Activated CD8-positive, alpha-beta T cell treated with anti-CD3 and anti-CD28 coated beads for 36 hours (primary cell): ENCODE measurements at regions of chr1 and their contacts with region 1.

Region 1: DNA sequence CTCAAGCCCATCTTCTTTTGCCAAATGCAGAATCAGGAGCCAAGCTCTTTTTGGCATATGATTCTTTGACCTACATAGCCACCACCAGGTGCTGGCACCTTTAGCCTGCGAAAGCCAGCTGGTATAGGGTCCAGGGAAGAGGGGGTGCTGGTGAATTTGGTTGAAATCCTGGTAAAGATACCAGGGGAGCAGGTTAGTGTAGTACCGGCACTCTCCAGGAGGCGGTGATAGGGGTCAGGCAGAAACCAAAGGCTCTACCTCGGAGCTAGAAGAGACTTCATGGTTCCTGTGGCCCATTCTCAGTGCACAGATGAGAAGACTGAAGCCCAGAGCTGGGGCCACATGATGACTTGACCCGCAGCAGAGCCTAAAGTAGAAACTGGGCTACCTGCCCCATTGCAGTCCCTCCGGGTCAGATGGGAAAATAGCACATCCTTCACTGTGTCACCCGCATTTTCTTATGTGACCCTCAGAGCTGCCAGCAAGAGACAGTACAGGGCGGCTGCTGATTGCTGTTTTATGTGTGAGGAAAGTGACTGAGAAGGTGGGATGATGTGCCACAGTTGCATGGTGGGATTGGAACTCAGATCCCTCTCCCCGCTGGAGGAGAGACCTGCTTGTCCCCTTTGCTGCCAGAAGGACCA is 36.0 kb upstream of the IL19 start:
- DNase-seq: peak; percentile 80
- ATAC-seq: peak; percentile 48
- H3K4me3 Mint-ChIP-seq: no peak overlapping the region
- H3K27ac Mint-ChIP-seq: peak overlapping the region; percentile 22
- H3K4me1 Mint-ChIP-seq: peaks cover 64% of the 10 kb centered on the region
- H3K27me3 Mint-ChIP-seq: no peaks in the 10 kb centered on the region
- CTCF ChIP-seq: peak; percentile 93

Region 2: GRCh38 chr1:206761159-206761768 is 26.6 kb after region 1 on chr1:
- CTCF ChIA-PET with region 1: interaction called, 82 read pairs
- POLR2A ChIA-PET with region 1: interaction called, 4 read pairs
- intact Hi-C with region 1: no loop called
- DNase-seq: no peak
- ATAC-seq: no peak
- H3K4me3 Mint-ChIP-seq: no peak overlapping the region
- H3K27ac Mint-ChIP-seq: peak overlapping the region; percentile 19
- H3K4me1 Mint-ChIP-seq: peaks cover 28% of the 10 kb centered on the region
- H3K27me3 Mint-ChIP-seq: no peaks in the 10 kb centered on the region
- CTCF ChIP-seq: no peak

Region 3: DNA sequence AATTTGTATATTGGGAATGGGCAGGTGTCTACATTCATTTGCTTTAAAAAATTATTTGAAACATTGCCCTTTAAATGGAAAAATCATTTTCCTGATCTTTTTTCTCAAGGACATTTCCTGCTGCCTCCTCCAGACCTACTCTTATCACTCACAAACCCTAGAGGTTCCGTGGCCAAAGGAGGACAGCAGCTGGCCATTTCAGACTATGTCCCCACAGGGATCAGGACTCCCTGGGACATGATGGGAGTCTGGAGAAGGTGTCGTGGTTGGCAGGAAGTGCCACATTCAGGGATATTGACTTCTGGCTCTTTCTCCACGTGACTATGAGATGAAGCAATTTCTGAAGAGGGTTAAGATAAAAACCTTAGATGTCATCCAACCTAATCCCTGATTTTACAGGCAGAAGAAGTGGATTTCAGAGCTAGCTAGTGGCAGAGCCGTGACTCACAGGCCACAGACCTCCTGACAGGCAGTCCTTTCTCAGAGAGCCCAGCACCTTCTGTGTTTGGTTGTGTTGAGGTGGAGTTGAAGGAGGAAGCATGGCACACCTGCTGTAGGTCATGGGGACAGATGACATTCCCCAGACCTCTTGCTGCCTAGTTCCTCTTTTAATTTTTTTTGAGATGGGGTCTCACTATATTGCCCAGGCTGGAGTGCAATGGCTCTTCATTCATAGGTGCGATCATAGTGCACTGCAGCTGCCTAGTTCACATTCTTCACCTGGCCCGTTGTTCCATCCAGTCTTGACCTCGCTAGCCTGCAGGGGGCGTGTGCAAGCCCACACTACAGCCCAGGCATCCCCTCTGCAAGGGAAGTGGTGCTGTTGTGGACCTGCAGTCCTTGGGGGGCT is 63.1 kb after region 1 on chr1:
- CTCF ChIA-PET with region 1: interaction called, 628 read pairs
- POLR2A ChIA-PET with region 1: interaction called, 19 read pairs
- intact Hi-C with region 1: no loop called
- DNase-seq: peak; percentile 50
- ATAC-seq: no peak
- H3K4me3 Mint-ChIP-seq: no peak overlapping the region
- H3K27ac Mint-ChIP-seq: no peak overlapping the region
- H3K4me1 Mint-ChIP-seq: peaks cover 68% of the 10 kb centered on the region
- H3K27me3 Mint-ChIP-seq: no peaks in the 10 kb centered on the region
- CTCF ChIP-seq: peak; percentile 64

Region 4: DNA sequence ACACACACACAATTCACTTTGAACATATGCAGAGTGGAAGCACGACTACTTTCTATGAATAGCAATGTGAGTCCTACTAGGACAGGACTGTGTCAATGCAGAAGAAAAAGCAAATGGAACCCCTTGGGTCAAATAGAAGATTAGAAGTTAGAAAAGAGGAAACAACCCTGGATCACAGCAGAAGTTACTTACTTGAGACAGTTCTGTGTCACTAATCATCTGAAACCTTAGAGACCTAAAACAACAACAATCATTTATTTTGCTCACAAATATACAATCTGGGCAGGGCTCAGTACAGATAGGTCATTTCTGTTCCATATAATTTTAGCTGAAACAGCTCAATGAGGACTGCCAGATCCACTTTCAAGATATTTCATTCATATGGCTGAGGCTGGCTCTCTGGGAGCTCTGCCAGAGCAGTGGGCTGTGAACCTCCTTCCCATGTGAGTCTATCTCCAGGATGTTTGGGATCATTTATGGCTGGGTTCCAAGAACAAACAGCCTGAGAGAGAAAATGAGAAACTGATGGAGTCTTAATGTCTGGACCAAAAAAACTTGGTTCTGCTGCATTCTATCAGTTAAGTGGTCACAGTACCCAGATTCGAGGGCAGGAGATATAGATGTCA is 80.2 kb after region 1 on chr1:
- CTCF ChIA-PET with region 1: interaction called, 628 read pairs
- POLR2A ChIA-PET with region 1: interaction called, 4 read pairs
- intact Hi-C with region 1: no loop called
- DNase-seq: no peak
- ATAC-seq: no peak
- H3K4me3 Mint-ChIP-seq: no peak overlapping the region
- H3K27ac Mint-ChIP-seq: no peak overlapping the region
- H3K4me1 Mint-ChIP-seq: peaks cover 24% of the 10 kb centered on the region
- H3K27me3 Mint-ChIP-seq: no peaks in the 10 kb centered on the region
- CTCF ChIP-seq: no peak

Region 5: DNA sequence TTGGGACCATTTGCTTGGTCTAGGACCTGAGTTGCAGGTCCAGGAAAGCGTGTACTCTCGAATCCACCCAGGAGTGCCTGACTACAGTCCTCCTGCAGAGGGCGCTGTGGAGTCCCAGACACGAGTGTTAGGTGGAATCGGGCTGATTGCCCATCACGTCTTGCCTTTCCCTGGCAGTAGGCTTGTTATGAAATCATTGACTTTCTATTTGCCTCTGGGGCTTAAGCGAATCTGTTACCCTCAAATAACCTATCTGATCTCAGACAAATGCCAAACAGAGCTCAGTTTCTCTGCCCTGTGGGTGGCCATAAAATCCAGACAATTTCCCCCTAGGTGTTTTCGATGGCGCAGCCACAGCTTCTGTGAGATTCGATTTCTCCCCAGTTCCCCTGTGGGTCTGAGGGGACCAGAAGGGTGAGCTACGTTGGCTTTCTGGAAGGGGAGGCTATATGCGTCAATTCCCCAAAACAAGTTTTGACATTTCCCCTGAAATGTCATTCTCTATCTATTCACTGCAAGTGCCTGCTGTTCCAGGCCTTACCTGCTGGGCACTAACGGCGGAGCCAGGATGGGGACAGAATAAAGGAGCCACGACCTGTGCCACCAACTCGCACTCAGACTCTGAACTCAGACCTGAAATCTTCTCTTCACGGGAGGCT is 130.5 kb after region 1 on chr1 and contains the start of gene IL20:
- CTCF ChIA-PET with region 1: interaction called, 24 read pairs
- POLR2A ChIA-PET with region 1: no interaction called
- intact Hi-C with region 1: no loop called
- DNase-seq: peak; percentile 92
- ATAC-seq: peak; percentile 97
- H3K4me3 Mint-ChIP-seq: no peak within 1 kb of the TSS
- H3K27ac Mint-ChIP-seq: no peak within 1 kb of the TSS
- H3K4me1 Mint-ChIP-seq: peaks cover 12% of the 10 kb centered on the region
- H3K27me3 Mint-ChIP-seq: peaks cover 2% of the 10 kb centered on the region
- CTCF ChIP-seq: peak; percentile 98
- total RNA-seq, gene IL20: not detected

Region 6: GRCh38 chr1:206982216-206982615 is 247.6 kb after region 1 on chr1:
- CTCF ChIA-PET with region 1: interaction called, 36 read pairs
- POLR2A ChIA-PET with region 1: no interaction called
- intact Hi-C with region 1: no loop called
- DNase-seq: peak; percentile 79
- ATAC-seq: peak; percentile 82
- H3K4me3 Mint-ChIP-seq: no peak overlapping the region
- H3K27ac Mint-ChIP-seq: no peak overlapping the region
- H3K4me1 Mint-ChIP-seq: no peaks in the 10 kb centered on the region
- H3K27me3 Mint-ChIP-seq: peaks cover 5% of the 10 kb centered on the region
- CTCF ChIP-seq: peak; percentile 78